ENCODE measurements at regions of chr1 and their contacts with region 1.

Region 1: DNA sequence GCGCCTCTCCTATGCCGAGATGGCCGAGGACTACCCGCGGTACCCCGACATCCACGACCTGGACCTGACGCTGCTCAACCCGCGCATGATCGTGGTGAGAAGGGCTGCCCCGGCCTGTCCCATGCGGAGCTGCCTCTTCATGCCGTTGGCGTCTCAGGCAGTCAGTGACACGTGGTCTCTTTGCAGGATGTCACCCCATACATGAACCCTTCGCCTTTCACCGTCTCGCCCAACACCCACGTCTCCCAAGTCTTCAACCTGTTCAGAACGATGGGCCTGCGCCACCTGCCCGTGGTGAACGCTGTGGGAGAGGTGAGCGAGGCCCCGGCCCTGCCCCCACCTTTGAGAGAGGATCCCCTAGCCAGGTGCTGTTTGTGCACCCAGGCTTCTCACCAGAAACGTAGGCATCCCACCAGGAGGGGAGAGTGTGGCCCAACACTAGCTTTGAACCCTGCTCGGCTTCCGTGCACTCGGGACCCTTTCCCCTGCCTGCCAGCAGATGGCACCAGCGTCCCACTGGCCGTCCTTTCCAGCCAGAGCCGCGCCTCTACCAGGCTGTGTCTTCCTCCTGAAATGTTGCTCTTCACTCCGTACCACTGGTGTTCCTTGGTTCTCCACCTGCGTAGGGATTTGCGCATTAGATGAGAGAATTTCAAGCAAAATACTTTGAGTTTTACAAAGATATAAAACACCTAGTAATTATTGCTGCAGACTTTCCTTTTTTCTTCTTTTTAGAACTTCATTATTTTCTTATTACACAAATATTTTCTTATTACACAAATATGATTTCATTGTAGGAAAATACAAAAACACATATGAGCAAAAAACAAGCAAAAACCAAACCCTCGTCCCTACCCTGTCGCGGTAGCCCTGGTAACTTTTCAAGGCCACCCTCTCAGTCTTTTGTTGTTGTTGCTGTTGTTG is 9.0 kb downstream of the NPPA start:
- DNase-seq: peak; percentile 94
- H3K4me3 ChIP-seq: no peak overlapping the region
- H3K27ac ChIP-seq: no peak overlapping the region
- H3K4me1 ChIP-seq: peaks cover 17 to 37% (median 26%) of the 10 kb centered on the region in 6 donors
- H3K27me3 ChIP-seq: no peaks in the 10 kb centered on the region
- CTCF ChIP-seq: peak; percentile 88 to 98 (median 94)
- POLR2A ChIP-seq: no peak

Region 2: DNA sequence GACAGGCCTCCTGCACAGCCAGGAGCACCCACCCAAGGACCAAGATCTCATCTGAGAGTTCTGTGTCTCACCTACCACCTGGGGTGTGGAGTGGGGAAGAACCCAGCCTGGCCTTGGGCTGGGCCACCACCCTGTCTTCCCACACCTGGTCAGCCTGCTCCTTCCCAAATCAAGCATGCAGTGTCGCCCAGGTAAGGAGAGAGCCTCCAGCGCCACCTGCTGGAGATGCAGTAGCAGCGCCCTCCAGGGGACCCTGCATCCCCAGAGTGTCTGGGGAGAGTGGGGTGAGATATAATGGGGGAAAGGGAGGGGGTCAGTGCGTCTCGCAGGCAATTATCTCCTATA is 55.3 kb after region 1 on chr1:
- intact Hi-C with region 1: loop called (anchors 5 kb)
- DNase-seq: peak; percentile 94
- H3K4me3 ChIP-seq: no peak overlapping the region
- H3K27ac ChIP-seq: no peak overlapping the region
- H3K4me1 ChIP-seq: peaks cover 0 to 9% (median 0%) of the 10 kb centered on the region in 6 donors
- H3K27me3 ChIP-seq: peaks cover 0 to 43% (median 24%) of the 10 kb centered on the region in 7 donors
- CTCF ChIP-seq: peak; percentile 76 to 94 (median 91)
- POLR2A ChIP-seq: no peak